GM13977 (cell line): ENCODE measurements at regions of chr17 and their contacts with region 1.

Region 1: DNA sequence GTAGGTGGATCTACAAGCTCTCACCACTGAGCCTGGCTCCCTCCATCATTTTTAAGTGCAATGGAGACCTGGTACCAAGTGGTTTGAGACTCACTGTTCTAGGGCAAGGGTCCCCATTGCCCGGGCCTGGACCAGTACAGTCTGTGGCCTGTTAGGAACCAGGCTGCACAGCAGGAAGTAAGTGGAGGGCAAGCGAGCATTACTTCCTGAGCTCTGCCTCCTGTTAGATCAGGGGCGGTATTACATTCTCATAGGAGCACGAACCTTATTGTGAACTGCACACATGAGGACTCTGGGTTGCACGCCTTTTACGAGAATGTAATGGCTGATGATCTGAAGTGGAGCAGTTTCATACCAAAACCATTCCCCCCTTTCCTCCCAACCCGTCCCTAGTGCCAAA is 6.8 kb upstream of the ZNF594 start:
- DNase-seq: no peak
- CTCF ChIP-seq: no peak

Region 2: GRCh38 chr17:4678427-4679026 is 519.9 kb before region 1 on chr17:
- in situ Hi-C with region 1: no loop called
- DNase-seq: no peak
- CTCF ChIP-seq: no peak

Region 3: GRCh38 chr17:5237541-5238016 is 39.1 kb after region 1 on chr17:
- in situ Hi-C with region 1: loop called (anchors 5 kb)
- DNase-seq: peak; percentile 56
- CTCF ChIP-seq: peak; percentile 92